ENCODE measurements at regions of chr12 and their contacts with region 1.

Region 1: GRCh38 chr12:32062881-32063280 is 43.8 kb upstream of the BICD1 start:
- DNase-seq: no peak
- H3K4me3 Mint-ChIP-seq: no peak overlapping the region
- H3K27ac Mint-ChIP-seq: no peak overlapping the region
- H3K4me1 Mint-ChIP-seq: peaks cover 15% of the 10 kb centered on the region
- H3K27me3 Mint-ChIP-seq: no peaks in the 10 kb centered on the region
- CTCF ChIP-seq: no peak

Region 2: GRCh38 chr12:31682136-31682962 is 380.5 kb before region 1 on chr12:
- CTCF ChIA-PET with region 1: no interaction called
- intact Hi-C with region 1: loop called (anchors 5 kb)
- DNase-seq: peak; percentile 81
- H3K4me3 Mint-ChIP-seq: peak overlapping the region; percentile 2
- H3K27ac Mint-ChIP-seq: peak overlapping the region; percentile 54
- H3K4me1 Mint-ChIP-seq: peaks cover 10% of the 10 kb centered on the region
- H3K27me3 Mint-ChIP-seq: no peaks in the 10 kb centered on the region
- CTCF ChIP-seq: peak; percentile 84

Region 3: DNA sequence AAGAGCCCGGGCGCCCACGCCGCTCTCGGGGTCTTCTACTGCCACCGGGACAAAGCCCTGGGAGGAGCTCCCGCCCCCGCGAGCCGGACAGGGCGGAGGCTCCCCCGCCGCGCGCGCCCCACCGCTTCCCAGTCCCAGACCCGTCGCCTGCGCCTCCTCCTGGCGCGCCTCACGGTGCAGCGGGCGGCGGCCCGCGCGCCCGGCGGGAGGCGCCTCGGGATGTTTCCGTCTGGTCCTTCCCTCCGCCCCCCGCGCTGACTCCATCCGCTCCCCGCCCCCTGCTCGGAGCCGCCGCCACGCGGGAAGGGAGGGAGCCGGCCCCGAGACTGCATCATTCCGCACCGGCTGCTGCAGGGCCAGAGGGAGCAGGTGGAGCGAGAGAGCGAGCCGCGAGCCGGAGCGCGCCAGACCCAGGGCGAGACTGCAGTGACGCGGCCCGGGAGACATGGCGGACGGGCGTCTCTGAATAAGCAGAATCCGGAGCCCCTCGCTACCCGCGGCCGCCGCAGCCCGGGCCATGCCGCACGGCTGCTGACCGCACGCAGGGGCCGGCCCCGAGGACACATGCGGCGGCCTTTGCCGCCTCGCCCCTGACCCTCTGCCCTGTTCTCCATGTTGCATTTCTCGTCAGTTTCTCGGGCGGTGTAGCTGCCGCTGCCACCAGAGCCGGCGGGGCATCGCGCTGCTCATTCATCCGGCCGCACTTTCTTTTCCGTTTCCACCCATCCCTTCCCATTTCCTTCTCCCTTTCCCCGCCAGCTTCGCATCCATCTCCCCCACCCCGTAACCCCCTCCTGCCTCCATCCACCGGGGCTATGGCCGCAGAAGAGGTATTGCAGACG is 43.9 kb after region 1 on chr12 and contains the start of gene BICD1:
- CTCF ChIA-PET with region 1: interaction called, 9 read pairs
- intact Hi-C with region 1: loop called (anchors 2 kb)
- DNase-seq: peak; percentile 89
- H3K4me3 Mint-ChIP-seq: peak within 1 kb of the TSS; percentile 91
- H3K27ac Mint-ChIP-seq: peak within 1 kb of the TSS; percentile 83
- H3K4me1 Mint-ChIP-seq: peaks cover 18% of the 10 kb centered on the region
- H3K27me3 Mint-ChIP-seq: no peaks in the 10 kb centered on the region
- CTCF ChIP-seq: peak; percentile 51
- total RNA-seq, gene BICD1: 37.3 and 45.6 TPM in 2 replicates

Region 4: DNA sequence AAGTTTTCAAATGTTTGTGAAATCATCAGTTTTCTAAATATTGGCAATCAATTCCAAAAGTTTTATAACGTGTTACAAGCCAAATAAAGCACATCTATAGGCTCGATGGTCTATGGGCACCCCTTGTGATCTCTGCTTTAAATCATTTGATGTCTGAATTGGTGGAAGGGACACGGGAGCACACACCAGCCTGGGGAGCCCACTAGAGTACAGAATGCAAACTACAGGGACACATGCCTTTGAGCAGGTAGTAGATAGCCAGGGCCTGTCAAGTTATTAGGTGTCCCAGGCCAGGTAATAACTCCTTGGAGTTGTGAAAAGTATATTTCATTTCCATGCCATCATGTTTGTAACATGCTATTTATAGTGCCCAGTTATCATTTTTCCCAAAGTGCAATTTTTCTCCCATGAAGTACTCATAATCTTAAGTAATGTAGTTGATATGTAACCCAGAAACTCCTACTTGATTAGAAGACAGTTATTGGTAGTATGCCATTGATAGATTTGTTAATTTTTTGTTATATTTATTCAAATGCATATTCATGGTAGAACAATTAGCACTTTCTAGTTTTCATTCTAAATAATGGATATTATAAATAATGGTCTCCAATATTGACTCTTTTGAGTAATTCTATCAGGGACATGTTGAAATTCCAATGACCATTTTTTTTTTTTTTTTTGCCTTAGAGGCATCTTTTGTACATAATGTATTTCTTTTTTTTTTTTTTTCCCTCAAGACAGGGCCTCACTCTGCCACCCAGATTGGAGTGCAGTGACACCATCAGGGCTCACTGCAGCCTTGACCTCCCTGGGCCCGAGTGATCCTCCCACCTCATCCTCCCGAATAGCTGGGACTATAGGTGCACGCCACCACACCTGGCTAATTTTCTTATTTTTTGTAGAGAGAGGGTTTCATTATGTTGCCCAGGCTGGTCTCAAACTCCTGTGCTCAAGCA is 239.6 kb after region 1 on chr12:
- CTCF ChIA-PET with region 1: interaction called, 4 read pairs
- intact Hi-C with region 1: loop called (anchors 2 kb)
- DNase-seq: peak; percentile 46
- H3K4me3 Mint-ChIP-seq: no peak overlapping the region
- H3K27ac Mint-ChIP-seq: no peak overlapping the region
- H3K4me1 Mint-ChIP-seq: no peaks in the 10 kb centered on the region
- H3K27me3 Mint-ChIP-seq: no peaks in the 10 kb centered on the region
- CTCF ChIP-seq: no peak

Region 5: DNA sequence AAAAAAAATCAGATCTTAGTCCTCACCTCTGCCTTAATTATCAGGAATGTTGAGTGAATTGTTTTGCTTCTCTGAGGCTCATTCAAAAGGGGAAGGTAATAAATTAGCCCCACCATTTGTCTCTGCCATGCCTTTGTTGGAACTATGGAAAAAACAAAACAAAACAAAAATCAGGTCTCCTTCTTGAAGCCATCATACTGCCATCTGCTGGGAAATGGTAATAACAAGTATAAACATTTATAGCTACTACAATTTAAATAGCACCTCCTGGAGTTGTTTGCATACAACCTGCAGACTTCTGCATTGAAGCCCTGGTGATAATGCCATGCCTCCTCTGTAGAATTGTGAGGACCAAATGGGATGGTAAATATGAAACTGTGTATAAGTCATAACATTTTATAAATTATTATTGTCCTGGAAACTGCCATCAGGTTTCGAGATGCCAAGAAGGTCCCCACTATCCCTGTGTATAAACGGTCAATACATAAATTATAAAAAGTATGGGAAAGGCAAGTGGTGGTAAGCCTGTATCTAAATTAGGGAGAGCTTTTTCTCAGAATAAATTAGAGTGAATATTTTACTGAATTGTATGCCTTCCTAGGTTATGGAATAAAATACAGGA is 249.3 kb after region 1 on chr12:
- CTCF ChIA-PET with region 1: interaction called, 12 read pairs
- intact Hi-C with region 1: no loop called
- DNase-seq: peak; percentile 16
- H3K4me3 Mint-ChIP-seq: no peak overlapping the region
- H3K27ac Mint-ChIP-seq: no peak overlapping the region
- H3K4me1 Mint-ChIP-seq: peaks cover 11% of the 10 kb centered on the region
- H3K27me3 Mint-ChIP-seq: no peaks in the 10 kb centered on the region
- CTCF ChIP-seq: peak; percentile 52